Naive thymus-derived CD4-positive, alpha-beta T cell (primary cell): ENCODE measurements at regions of chrX and their contacts with region 1.

Region 1: GRCh38 chrX:16719334-16720084 is at the start of gene SYAP1:
- DNase-seq: peak; percentile 85 to 100 (median 96)
- ATAC-seq: peak; percentile 96
- H3K4me3 ChIP-seq: peak within 1 kb of the TSS; percentile 95
- H3K4me3 Mint-ChIP-seq: peak within 1 kb of the TSS; percentile 88 to 98 (median 94)
- H3K27ac ChIP-seq: peak within 1 kb of the TSS; percentile 99
- H3K27ac Mint-ChIP-seq: peak within 1 kb of the TSS; percentile 92 to 100 (median 99)
- H3K4me1 ChIP-seq: peaks cover 0 to 10% of the 10 kb centered on the region in 2 donors
- H3K4me1 Mint-ChIP-seq: peaks cover 2 to 63% (median 39%) of the 10 kb centered on the region in 7 donors
- H3K27me3 ChIP-seq: no peaks in the 10 kb centered on the region
- H3K27me3 Mint-ChIP-seq: no peaks in the 10 kb centered on the region
- total RNA-seq, gene SYAP1: 15.4 to 36.9 (median 15.6) TPM

Region 2: GRCh38 chrX:15749642-15750610 is 969.6 kb before region 1 on chrX:
- CTCF ChIA-PET with region 1: no interaction called
- POLR2A ChIA-PET with region 1: no interaction called
- intact Hi-C with region 1: loop called (anchors 2 to 10 kb)
- DNase-seq: peak in 7 of 9 donors; percentile 20 to 61 (median 52)
- ATAC-seq: peak; percentile 55
- H3K4me3 ChIP-seq: peak overlapping the region; percentile 43
- H3K4me3 Mint-ChIP-seq: peak overlapping the region; percentile 60 to 86 (median 77)
- H3K27ac ChIP-seq: peak overlapping the region; percentile 89
- H3K27ac Mint-ChIP-seq: peak overlapping the region; percentile 92 to 99 (median 97)
- H3K4me1 ChIP-seq: peaks cover 51 to 55% of the 10 kb centered on the region in 2 donors
- H3K4me1 Mint-ChIP-seq: peaks cover 36 to 97% (median 82%) of the 10 kb centered on the region in 7 donors
- H3K27me3 ChIP-seq: no peaks in the 10 kb centered on the region
- H3K27me3 Mint-ChIP-seq: no peaks in the 10 kb centered on the region

Region 3: DNA sequence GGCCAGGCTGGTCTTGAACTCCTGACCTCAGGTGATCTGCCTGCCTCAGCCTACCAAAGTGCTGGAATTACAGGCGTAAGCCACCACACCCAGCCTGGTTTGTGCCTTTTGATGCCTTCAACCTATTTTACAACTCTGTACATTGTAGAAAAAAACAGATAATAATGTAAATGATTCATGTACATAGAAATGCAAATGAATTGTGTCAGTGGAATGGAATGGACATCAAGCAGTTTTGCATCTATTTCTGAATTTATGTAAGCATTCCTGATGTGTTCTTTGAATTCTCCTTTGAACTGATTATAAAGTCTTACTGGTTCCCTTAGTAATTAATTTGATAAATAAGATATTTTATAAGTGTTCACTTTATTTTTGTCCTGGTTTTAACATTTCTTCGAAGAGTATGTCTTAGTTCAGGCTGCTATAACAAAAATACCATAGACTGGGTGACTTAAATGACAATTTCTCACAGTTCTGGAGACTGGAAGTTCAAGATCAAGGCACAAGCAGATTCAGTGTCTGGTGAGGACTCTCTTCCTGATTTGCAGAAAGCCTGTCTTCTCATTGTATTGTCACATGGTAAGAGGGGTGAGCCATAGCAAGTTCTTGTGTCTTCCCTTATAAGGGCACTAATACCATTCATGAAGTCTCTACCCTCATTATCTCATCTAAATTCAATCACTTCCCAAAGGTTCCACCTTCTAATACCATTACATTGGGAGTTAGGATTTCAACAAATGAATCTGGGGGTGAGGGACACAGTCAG is 231.7 kb before region 1 on chrX:
- CTCF ChIA-PET with region 1: no interaction called
- POLR2A ChIA-PET with region 1: no interaction called
- intact Hi-C with region 1: no loop called
- DNase-seq: no peak
- ATAC-seq: no peak
- H3K4me3 ChIP-seq: no peak overlapping the region
- H3K4me3 Mint-ChIP-seq: no peak overlapping the region
- H3K27ac ChIP-seq: no peak overlapping the region
- H3K27ac Mint-ChIP-seq: no peak overlapping the region
- H3K4me1 ChIP-seq: peaks cover 0 to 5% of the 10 kb centered on the region in 2 donors
- H3K4me1 Mint-ChIP-seq: peaks cover 5 to 28% (median 11%) of the 10 kb centered on the region in 7 donors
- H3K27me3 ChIP-seq: no peaks in the 10 kb centered on the region
- H3K27me3 Mint-ChIP-seq: no peaks in the 10 kb centered on the region

Region 4: DNA sequence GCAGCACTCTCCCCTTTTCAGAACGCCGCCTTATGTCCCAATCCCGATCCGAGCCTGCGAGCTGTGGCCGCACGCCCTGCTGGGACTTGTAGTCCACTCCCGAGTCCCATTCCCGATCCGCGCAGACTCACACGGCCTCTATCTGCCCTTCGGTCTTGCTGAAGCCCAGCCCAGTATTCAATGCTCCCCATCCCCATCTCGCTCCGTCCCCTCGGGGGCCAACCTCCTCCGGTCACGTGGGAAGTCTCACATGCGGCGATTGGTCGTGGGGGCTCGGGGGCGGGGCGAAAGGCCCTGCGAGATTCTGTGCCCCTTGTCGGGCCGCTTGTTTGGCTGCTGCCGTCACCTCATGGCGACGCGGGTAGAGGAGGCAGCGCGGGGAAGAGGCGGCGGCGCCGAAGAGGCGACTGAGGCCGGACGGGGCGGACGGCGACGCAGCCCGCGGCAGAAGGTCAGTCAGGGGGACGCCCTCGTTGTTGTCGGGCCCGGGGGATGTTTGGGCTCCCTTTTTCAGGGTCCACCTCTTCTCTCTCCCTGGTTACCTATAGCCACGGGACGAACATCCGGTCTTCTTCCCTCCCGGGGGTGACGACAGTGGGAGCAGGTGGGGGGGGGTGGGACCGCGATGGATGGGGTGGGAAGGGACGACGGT is 66.8 kb after region 1 on chrX and contains the start of gene TXLNG:
- CTCF ChIA-PET with region 1: no interaction called
- POLR2A ChIA-PET with region 1: no interaction called
- intact Hi-C with region 1: loop called (anchors 1 kb)
- DNase-seq: peak; percentile 81 to 98 (median 97)
- ATAC-seq: peak; percentile 97
- H3K4me3 ChIP-seq: peak within 1 kb of the TSS; percentile 94
- H3K4me3 Mint-ChIP-seq: peak within 1 kb of the TSS; percentile 95 to 99 (median 97)
- H3K27ac ChIP-seq: peak within 1 kb of the TSS; percentile 88
- H3K27ac Mint-ChIP-seq: peak within 1 kb of the TSS; percentile 78 to 94 (median 90)
- H3K4me1 ChIP-seq: peaks cover 0 to 3% of the 10 kb centered on the region in 2 donors
- H3K4me1 Mint-ChIP-seq: peaks cover 4 to 42% (median 12%) of the 10 kb centered on the region in 7 donors
- H3K27me3 ChIP-seq: no peaks in the 10 kb centered on the region
- H3K27me3 Mint-ChIP-seq: no peaks in the 10 kb centered on the region
- total RNA-seq, gene TXLNG: 11.9 to 23.1 (median 17.3) TPM

Region 5: GRCh38 chrX:16843208-16843909 is 123.8 kb after region 1 on chrX:
- CTCF ChIA-PET with region 1: no interaction called
- POLR2A ChIA-PET with region 1: no interaction called
- intact Hi-C with region 1: no loop called
- DNase-seq: no peak
- ATAC-seq: no peak
- H3K4me3 ChIP-seq: no peak overlapping the region
- H3K4me3 Mint-ChIP-seq: no peak overlapping the region
- H3K27ac ChIP-seq: no peak overlapping the region
- H3K27ac Mint-ChIP-seq: peak overlapping the region in 2 of 9 donors; percentile 5 to 14
- H3K4me1 ChIP-seq: no peaks in the 10 kb centered on the region
- H3K4me1 Mint-ChIP-seq: peaks cover 0 to 4% (median 0%) of the 10 kb centered on the region in 7 donors
- H3K27me3 ChIP-seq: no peaks in the 10 kb centered on the region
- H3K27me3 Mint-ChIP-seq: no peaks in the 10 kb centered on the region